ENCODE measurements at regions of chr20 and their contacts with region 1.

Region 1: GRCh38 chr20:43252761-43253160 is 63.1 kb upstream of the PTPRT start:
- DNase-seq: no peak
- H3K4me3 ChIP-seq: no peak overlapping the region
- H3K27ac ChIP-seq: no peak overlapping the region
- H3K4me1 ChIP-seq: no peaks in the 10 kb centered on the region
- H3K27me3 ChIP-seq: no peaks in the 10 kb centered on the region
- CTCF ChIP-seq: no peak
- POLR2A ChIP-seq: no peak

Region 2: DNA sequence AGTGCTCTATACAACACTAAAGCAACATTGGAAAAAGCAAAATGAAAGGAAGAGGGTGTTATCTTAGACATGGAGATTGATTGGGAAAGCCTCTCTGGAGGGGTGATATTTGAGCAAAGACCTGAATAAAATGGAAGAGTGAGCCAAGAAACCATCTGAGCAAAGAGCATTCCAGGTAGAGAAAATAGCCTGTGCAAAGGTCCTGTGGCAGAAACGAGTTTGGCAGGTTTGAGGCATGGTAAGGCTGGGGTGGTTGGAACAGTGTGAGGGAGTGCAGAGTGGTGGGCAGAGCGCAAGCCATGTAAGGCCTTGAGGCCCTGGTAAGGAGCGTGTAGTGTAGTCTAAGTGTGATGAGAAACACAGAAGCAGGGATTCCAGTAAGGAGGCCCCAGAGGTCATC is 23.1 kb before region 1 on chr20:
- intact Hi-C with region 1: no loop called
- DNase-seq: no peak
- H3K4me3 ChIP-seq: no peak overlapping the region
- H3K27ac ChIP-seq: no peak overlapping the region
- H3K4me1 ChIP-seq: no peaks in the 10 kb centered on the region
- H3K27me3 ChIP-seq: no peaks in the 10 kb centered on the region
- CTCF ChIP-seq: no peak
- POLR2A ChIP-seq: no peak

Region 3: GRCh38 chr20:43300901-43301300 is 48.1 kb after region 1 on chr20:
- intact Hi-C with region 1: loop called (anchors 2 kb)
- DNase-seq: no peak
- H3K4me3 ChIP-seq: no peak overlapping the region
- H3K27ac ChIP-seq: no peak overlapping the region
- H3K4me1 ChIP-seq: no peaks in the 10 kb centered on the region
- H3K27me3 ChIP-seq: no peaks in the 10 kb centered on the region
- CTCF ChIP-seq: no peak
- POLR2A ChIP-seq: no peak

Measured in breast epithelium (tissue), 4 donors.